Vagina (tissue), 2 donors: ENCODE measurements at regions of chr4 and their contacts with region 1.

Region 1: DNA sequence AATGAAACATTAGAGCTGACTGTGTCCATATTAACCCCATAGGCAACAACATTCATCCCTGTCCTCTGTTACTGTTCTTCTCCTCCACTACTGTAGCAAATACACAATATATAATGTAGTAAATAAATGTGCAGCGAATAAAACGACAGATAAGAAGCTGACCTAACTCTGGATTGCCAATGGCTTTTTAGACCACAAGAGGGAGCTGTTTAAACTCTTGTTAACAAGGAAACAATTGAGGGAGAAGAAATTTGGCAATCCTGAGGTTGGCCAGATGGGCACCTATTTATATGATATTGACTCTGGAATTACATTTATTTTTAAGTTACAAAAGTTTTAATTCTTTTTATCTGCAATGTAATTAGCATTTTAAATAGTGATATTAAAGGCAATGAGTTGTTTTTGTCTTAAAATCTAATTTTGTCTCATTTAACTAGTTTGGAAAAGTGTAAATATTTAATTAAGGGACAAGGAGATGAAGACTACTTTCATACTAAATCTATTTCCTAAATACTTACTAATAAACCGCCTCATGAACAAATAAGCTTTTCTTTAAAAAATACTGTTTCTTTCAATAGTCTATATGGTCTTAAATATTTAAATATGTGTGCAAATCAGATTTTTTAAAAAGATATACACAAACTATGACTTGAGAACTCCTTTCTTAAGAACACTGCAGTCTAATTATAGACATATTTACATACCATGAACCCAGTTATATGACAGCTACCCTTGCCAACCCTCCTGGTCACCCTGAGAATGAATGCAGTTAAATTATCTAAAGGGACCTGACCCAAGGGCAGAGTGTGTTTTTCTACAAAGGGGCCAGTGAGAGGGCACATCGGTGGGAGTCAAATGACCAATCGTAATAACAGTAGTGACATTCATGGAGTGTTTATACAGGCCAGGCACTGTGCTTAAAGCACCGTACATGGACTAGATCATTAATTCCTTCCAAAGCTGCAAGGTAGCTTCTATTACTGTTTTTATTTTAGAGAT is 52.9 kb upstream of the HPF1 start:
- DNase-seq: no peak
- H3K4me3 ChIP-seq: no peak overlapping the region
- H3K27ac ChIP-seq: no peak overlapping the region
- H3K4me1 ChIP-seq: no peaks in the 10 kb centered on the region
- H3K27me3 ChIP-seq: no peaks in the 10 kb centered on the region
- CTCF ChIP-seq: peak; percentile 68 to 76 (median 72)
- POLR2A ChIP-seq: no peak

Region 2: DNA sequence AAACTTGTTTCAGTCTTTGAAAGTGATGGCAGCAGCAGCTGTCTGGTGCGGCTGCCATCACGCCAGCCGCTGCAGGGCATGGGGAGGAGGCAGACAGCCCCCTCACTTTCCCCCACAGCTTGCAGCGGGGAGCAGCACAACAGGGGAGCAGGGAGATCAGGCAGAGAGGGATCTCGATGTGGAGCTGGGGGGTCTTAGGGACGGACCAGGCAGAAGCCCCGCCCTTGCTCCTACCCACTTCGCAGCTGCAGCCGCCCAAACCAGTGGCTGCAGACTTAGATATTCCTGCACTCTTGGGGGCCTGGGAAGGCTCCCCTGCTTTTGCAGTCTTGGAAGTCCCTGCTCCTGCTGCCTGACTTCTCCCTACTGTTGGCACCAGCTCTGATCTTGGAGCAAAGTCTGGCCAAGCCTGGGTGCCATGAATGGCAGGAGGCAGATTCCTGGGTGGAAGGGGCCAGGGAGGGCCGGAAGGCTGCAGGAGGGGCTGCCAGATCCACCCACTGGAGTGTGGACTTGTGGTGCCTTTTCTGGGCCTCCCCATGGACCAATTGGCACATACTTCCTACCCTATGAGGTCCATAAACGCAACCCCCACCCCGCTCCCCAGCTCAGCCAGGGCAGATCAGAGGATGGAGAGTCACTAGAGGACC is 229.5 kb after region 1 on chr4:
- intact Hi-C with region 1: loop called (anchors 5 kb)
- DNase-seq: no peak
- H3K4me3 ChIP-seq: no peak overlapping the region
- H3K27ac ChIP-seq: no peak overlapping the region
- H3K4me1 ChIP-seq: no peaks in the 10 kb centered on the region
- H3K27me3 ChIP-seq: no peaks in the 10 kb centered on the region
- CTCF ChIP-seq: no peak
- POLR2A ChIP-seq: no peak